Right cardiac atrium (tissue), 5 donors: ENCODE measurements at regions of chr2 and their contacts with region 1.

Region 1: GRCh38 chr2:172465417-172466334 is 38.3 kb downstream of the ITGA6 start:
- DNase-seq: peak in 2 of 3 donors; percentile 50 to 72
- ATAC-seq: peak; percentile 79 to 81
- H3K4me3 ChIP-seq: peak overlapping the region; percentile 3
- H3K27ac ChIP-seq: no peak overlapping the region
- H3K4me1 ChIP-seq: peaks cover 3% of the 10 kb centered on the region
- H3K27me3 ChIP-seq: no peaks in the 10 kb centered on the region

Region 2: GRCh38 chr2:172172513-172173173 is 293.0 kb before region 1 on chr2:
- intact Hi-C with region 1: loop called (anchors 2 to 5 kb)
- DNase-seq: peak; percentile 69 to 89 (median 88)
- ATAC-seq: peak; percentile 99 to 100
- H3K4me3 ChIP-seq: peak overlapping the region; percentile 50
- H3K27ac ChIP-seq: no peak overlapping the region
- H3K4me1 ChIP-seq: no peaks in the 10 kb centered on the region
- H3K27me3 ChIP-seq: no peaks in the 10 kb centered on the region

Region 3: DNA sequence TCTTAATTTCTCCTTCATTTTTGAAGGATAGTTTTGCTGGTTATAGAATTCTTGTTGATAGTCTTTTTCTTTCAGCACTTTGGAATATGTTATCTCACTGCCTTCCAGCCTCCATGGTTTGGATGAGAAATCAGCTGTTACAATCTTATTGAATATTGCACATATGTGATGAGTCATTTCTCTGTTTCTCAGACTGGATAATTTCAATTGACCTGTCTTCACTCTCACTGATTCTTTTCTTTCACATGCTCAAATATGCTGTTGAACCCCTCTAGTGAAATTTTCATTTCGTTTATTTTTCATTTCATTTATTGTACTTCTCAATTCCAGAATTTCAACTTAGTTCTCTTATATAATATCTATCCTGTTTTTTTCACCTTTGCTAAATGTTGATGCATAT is 112.4 kb after region 1 on chr2:
- intact Hi-C with region 1: no loop called
- DNase-seq: no peak
- ATAC-seq: no peak
- H3K4me3 ChIP-seq: no peak overlapping the region
- H3K27ac ChIP-seq: no peak overlapping the region
- H3K4me1 ChIP-seq: no peaks in the 10 kb centered on the region
- H3K27me3 ChIP-seq: no peaks in the 10 kb centered on the region